ENCODE measurements at regions of chr19 and their contacts with region 1.

Region 1: GRCh38 chr19:44500148-44500956 is at the start of gene ZNF180:
- DNase-seq: peak; percentile 97
- ATAC-seq: peak; percentile 88
- H3K4me3 Mint-ChIP-seq: peak within 1 kb of the TSS; percentile 91
- H3K27ac Mint-ChIP-seq: peak within 1 kb of the TSS; percentile 94
- H3K4me1 Mint-ChIP-seq: peaks cover 28% of the 10 kb centered on the region
- H3K27me3 Mint-ChIP-seq: peaks cover 5% of the 10 kb centered on the region
- total RNA-seq, gene ZNF180: 5.5 to 7.7 TPM

Region 2: DNA sequence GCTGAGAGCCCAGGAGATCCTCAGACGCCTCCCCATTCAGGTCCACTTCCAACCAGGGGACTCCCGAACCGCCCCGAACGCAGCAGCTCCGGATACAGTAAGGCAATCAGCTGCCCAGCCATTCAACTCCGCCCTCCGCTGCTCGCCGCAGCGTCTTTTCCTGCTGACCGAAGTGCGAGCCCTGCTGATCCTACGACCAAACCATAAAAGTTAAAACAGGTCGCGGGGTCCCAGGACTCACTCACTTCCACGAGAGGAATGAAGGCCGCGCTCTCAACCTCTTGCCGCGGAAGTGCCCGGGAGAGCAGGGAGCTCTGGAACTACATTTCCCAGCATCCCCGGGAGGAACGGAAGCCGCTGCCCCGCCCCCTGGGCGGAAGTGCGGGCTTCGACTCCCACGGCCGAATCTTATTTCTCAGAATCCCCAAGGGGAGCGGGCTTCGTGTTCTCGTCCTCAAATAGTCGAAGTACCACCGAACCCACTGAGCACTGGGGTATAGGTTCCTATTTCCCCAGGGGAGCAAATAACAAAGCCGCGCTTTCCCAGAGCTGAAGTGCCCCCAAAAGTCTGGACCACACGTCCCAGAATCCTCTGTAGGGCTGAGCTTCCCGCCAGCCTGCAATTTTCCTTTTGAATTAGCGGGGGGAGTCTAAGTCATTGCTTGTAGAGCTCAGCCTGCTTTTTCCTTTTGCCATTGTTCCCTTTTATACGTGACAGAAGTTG is 565.2 kb before region 1 on chr19 and contains the start of gene ZNF45:
- CTCF ChIA-PET with region 1: no interaction called
- POLR2A ChIA-PET with region 1: interaction called, 3 read pairs
- intact Hi-C with region 1: loop called in 1 of 2 experiments (anchors 1 kb)
- DNase-seq: peak; percentile 92
- ATAC-seq: peak; percentile 95
- H3K4me3 Mint-ChIP-seq: peak within 1 kb of the TSS; percentile 93
- H3K27ac Mint-ChIP-seq: peak within 1 kb of the TSS; percentile 91
- H3K4me1 Mint-ChIP-seq: peaks cover 22% of the 10 kb centered on the region
- H3K27me3 Mint-ChIP-seq: no peaks in the 10 kb centered on the region
- total RNA-seq, gene ZNF45: 9.6 to 12.1 TPM

Region 3: GRCh38 chr19:44071824-44072542 is 428.4 kb before region 1 on chr19 and contains the start of gene ZNF284:
- CTCF ChIA-PET with region 1: no interaction called
- POLR2A ChIA-PET with region 1: no interaction called
- intact Hi-C with region 1: loop called in 1 of 2 experiments (anchors 1 kb)
- DNase-seq: peak; percentile 88
- ATAC-seq: peak; percentile 99
- H3K4me3 Mint-ChIP-seq: peak within 1 kb of the TSS; percentile 83
- H3K27ac Mint-ChIP-seq: peak within 1 kb of the TSS; percentile 78
- H3K4me1 Mint-ChIP-seq: peaks cover 23% of the 10 kb centered on the region
- H3K27me3 Mint-ChIP-seq: peaks cover 2% of the 10 kb centered on the region
- total RNA-seq, gene ZNF284: 2.1 TPM

Region 4: DNA sequence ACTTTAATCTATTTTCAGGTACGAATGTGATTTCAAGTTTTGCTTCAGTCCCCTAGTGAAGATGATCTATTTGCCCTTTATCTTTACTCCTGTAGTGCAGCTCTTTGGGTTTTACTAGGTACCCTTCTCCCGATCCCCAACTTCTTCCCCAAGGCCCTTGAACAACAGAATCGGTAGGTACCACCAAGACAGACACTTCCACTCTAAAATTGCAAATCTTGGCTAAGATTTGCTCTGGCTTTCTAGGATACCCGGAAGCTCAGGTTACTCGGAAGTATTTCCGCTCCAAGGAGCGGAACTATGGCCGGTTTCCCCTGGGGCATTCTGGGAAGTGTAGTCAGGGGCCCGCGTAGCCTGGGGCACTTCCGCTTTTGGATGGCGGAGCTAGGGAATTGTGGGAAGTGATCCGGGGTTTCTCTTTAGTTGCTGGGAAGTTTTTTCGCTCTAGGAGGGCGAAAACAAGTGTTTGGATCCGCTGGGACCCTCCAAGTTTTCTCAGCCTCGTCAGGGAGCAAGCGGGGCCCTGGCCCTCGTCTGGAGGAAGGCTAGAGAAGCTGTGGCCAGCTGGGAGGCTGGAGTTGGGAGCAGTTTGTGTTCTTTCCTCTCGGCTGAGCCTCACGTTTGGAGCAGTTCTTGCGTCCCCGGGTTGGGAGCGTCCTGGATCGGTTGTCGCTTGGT is 293.1 kb before region 1 on chr19:
- CTCF ChIA-PET with region 1: no interaction called
- POLR2A ChIA-PET with region 1: no interaction called
- intact Hi-C with region 1: loop called in 1 of 2 experiments (anchors 1 kb)
- DNase-seq: peak; percentile 84
- ATAC-seq: peak; percentile 93
- H3K4me3 Mint-ChIP-seq: peak overlapping the region; percentile 80
- H3K27ac Mint-ChIP-seq: peak overlapping the region; percentile 73
- H3K4me1 Mint-ChIP-seq: peaks cover 4% of the 10 kb centered on the region
- H3K27me3 Mint-ChIP-seq: peaks cover 2% of the 10 kb centered on the region

Region 5: GRCh38 chr19:44401139-44402115 is 98.9 kb before region 1 on chr19 and contains the start of gene ZNF285:
- CTCF ChIA-PET with region 1: no interaction called
- POLR2A ChIA-PET with region 1: no interaction called
- intact Hi-C with region 1: loop called in 1 of 2 experiments (anchors 1 kb)
- DNase-seq: peak; percentile 91
- ATAC-seq: peak; percentile 99
- H3K4me3 Mint-ChIP-seq: peak within 1 kb of the TSS; percentile 75
- H3K27ac Mint-ChIP-seq: peak within 1 kb of the TSS; percentile 76
- H3K4me1 Mint-ChIP-seq: peaks cover 10% of the 10 kb centered on the region
- H3K27me3 Mint-ChIP-seq: no peaks in the 10 kb centered on the region
- total RNA-seq, gene ZNF285: 1.2 to 1.4 TPM

Region 6: DNA sequence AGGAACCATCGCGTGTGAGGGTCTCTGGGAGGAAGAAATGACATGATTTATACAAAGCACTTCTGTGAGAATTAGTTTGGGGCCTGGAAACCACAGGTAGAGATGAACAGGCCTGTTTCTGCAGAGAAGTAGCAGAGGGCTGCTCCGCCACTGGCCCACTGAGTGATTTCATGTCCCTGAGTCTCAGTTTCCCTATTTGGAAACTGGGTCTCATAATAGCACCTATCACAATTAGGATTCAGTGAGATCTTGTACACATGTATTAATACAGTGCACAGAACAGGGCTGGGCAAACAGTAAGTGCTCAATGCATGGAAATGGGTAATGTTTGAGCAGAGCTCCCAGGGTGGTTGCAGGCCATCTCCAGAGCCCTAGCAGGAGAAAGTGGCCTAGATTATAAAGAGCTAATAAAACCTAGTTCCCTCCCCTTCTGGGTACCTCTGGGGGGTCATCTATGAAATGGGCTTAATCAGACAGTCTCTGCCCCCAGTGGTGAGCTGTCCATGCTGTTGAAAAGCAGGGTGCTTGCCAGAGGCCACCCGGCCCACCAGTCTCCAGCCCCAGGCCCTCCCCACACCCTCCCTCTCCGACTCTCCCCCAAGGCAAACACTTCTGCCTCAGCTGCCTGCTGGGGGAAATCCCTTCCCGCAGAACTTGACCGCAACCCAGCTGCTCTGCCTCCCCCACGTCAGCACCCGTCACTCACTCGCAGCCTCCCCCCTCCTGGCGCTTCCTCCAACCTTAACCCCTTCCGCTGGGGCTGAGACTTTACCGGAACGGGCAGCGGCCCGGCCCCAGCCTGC is 252.7 kb after region 1 on chr19:
- CTCF ChIA-PET with region 1: no interaction called
- POLR2A ChIA-PET with region 1: no interaction called
- intact Hi-C with region 1: loop called in 1 of 2 experiments (anchors 5 kb)
- DNase-seq: peak; percentile 98
- ATAC-seq: peak; percentile 79
- H3K4me3 Mint-ChIP-seq: peak overlapping the region; percentile 94
- H3K27ac Mint-ChIP-seq: peak overlapping the region; percentile 97
- H3K4me1 Mint-ChIP-seq: peaks cover 54% of the 10 kb centered on the region
- H3K27me3 Mint-ChIP-seq: no peaks in the 10 kb centered on the region